ENCODE measurements at regions of chr2 and their contacts with region 1.

Region 1: DNA sequence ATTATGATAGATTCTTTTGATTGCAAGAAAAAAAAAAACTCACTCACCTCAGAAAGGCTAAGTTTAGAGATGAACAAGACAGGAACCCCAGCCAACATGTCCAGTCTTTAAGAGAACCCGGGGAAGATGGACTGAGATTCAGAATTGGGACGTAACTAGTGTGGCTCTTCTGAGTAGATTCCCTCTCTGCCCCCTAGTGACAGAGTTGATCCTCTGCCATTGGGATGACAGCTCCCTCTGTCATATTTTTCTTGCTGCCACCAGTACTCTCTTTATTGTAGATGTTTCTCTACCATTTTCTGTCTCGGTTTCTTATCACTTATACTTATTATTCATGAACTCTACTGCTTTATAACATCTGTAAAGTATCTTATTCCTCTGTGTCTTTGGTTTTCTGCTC is 77.7 kb downstream of the GULP1 start:
- DNase-seq: no peak
- H3K4me3 ChIP-seq: no peak overlapping the region
- H3K27ac ChIP-seq: no peak overlapping the region
- H3K4me1 ChIP-seq: no peaks in the 10 kb centered on the region
- H3K27me3 ChIP-seq: no peaks in the 10 kb centered on the region
- CTCF ChIP-seq: peak; percentile 86

Region 2: DNA sequence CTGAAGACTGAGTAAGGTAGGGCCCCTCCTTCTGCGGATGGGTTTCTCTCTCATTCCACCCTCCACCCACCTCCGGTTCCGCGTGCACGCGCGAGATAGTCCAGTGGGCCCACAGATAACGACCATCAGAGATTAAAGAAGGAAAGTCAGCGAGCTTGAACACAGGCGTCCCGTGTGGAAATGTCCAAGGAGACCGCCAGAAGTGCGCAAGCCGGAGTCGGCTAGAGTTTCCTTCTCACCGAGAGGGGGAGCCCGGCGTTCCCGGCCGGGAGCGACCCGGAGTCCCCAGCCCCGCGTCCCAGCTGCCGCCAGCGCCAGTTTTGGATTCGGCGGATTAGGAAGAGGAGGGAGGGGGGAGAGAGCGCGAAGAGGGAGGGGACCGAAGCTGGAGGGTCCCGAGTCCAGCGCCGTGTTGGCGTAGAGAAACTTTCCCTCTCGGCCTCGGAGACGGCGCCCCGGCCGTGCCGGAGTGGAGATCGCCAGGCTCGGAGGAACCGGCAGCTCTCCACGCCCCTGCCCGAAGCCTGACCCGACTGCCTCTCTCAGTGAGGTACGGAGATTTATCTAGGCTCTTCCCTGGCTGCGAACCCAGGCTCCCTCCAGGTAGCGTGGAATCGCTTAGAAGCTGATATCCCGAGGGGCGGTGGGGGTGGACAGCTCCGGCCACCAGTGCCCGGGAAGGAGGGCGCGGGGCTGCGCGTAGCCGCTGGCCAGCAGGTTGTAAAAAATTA is 77.6 kb before region 1 on chr2 and contains the start of gene GULP1:
- intact Hi-C with region 1: loop called (anchors 10 kb)
- DNase-seq: peak; percentile 76
- H3K4me3 ChIP-seq: peak within 1 kb of the TSS; percentile 81
- H3K27ac ChIP-seq: peak within 1 kb of the TSS; percentile 87
- H3K4me1 ChIP-seq: peaks cover 46% of the 10 kb centered on the region
- H3K27me3 ChIP-seq: no peaks in the 10 kb centered on the region
- CTCF ChIP-seq: peak; percentile 79
- total RNA-seq, gene GULP1: 5.7 TPM

Region 3: DNA sequence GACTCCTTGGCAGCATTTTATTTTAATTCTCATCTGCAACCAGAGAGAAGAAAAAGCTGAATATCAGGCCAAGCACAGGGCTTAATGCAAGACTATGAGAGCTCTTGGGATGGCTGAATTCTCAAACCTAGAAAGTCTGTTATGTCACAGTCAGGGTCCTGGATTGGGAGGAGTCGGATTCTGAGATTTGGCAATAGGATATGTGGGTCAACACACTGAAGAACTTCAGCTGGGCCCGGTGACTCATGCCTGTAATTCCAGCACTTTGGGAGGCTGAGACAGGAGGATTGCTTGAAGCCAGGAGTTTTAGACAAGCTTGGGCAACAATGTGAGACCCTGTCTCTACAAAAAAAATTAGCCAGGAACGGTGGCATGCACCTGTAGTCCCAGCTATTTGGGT is 707.2 kb after region 1 on chr2:
- intact Hi-C with region 1: no loop called
- DNase-seq: peak; percentile 17
- H3K4me3 ChIP-seq: no peak overlapping the region
- H3K27ac ChIP-seq: no peak overlapping the region
- H3K4me1 ChIP-seq: no peaks in the 10 kb centered on the region
- H3K27me3 ChIP-seq: no peaks in the 10 kb centered on the region
- CTCF ChIP-seq: no peak